ENCODE measurements at regions of chrX and their contacts with region 1.

Region 1: DNA sequence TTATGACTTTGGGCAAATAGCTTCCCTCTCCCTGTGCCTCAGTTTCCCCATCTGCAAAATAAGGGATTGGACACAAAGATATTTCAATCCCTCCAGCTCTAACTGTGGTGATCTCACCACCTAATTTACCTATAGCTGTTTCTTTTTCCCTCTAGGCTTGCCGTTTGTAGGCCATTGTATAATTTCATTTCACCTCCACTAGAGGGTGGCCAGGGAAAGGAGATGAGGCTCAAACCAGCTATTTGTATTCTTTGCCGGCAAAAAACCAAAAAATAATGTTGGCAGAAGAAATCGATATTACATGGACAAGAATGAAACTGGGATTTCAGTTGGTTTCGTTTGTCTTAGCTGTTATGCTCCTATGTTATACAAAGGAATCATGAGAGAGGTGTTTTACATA is 36.1 kb upstream of the DOCK11 start:
- DNase-seq: no peak
- ATAC-seq: no peak
- H3K4me3 ChIP-seq: no peak overlapping the region
- H3K27ac ChIP-seq: no peak overlapping the region
- H3K4me1 ChIP-seq: no peaks in the 10 kb centered on the region
- H3K27me3 ChIP-seq: no peaks in the 10 kb centered on the region
- CTCF ChIP-seq: peak in 9 of 12 donors; percentile 17 to 49 (median 37)
- POLR2A ChIP-seq: no peak

Region 2: GRCh38 chrX:118595501-118596042 is 136.1 kb after region 1 on chrX:
- intact Hi-C with region 1: loop called in 4 of 10 experiments (anchors 2 to 10 kb)
- DNase-seq: no peak
- ATAC-seq: peak in 1 of 4 donors; percentile 33
- H3K4me3 ChIP-seq: no peak overlapping the region
- H3K27ac ChIP-seq: peak overlapping the region in 2 of 12 donors; percentile 19 to 24
- H3K4me1 ChIP-seq: peaks cover 0 to 3% (median 0%) of the 10 kb centered on the region in 12 donors
- H3K27me3 ChIP-seq: peaks cover 0 to 11% (median 0%) of the 10 kb centered on the region in 9 donors
- CTCF ChIP-seq: no peak
- POLR2A ChIP-seq: no peak

Region 3: DNA sequence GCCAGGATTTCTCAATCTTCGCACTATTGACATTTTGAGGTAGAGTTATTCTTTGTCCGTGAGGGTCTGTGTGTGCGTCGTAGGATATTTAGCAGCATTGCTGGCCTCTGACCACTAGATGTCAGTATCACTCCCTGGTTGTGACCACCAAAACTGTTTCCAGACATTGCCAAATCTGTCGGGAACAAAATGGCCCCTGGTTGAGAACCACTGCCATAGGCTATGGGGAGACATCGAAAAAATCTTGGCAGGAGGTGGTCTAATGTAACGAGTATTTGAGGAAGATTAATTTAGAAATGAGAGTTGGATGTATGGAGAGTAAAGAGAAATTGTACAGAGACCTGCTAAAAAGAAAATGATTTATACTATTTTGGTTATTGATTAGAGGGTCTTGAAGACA is 144.5 kb after region 1 on chrX:
- intact Hi-C with region 1: loop called in 4 of 10 experiments (anchors 2 to 10 kb)
- DNase-seq: peak in 3 of 5 donors; percentile 10 to 38 (median 22)
- ATAC-seq: peak; percentile 37 to 77 (median 59)
- H3K4me3 ChIP-seq: peak overlapping the region in 2 of 12 donors; percentile 4 to 24
- H3K27ac ChIP-seq: peak overlapping the region in 1 of 12 donors; percentile 36
- H3K4me1 ChIP-seq: peaks cover 0 to 4% (median 0%) of the 10 kb centered on the region in 12 donors
- H3K27me3 ChIP-seq: peaks cover 0 to 5% (median 0%) of the 10 kb centered on the region in 9 donors
- CTCF ChIP-seq: peak; percentile 62 to 81 (median 73)
- POLR2A ChIP-seq: no peak

Region 4: DNA sequence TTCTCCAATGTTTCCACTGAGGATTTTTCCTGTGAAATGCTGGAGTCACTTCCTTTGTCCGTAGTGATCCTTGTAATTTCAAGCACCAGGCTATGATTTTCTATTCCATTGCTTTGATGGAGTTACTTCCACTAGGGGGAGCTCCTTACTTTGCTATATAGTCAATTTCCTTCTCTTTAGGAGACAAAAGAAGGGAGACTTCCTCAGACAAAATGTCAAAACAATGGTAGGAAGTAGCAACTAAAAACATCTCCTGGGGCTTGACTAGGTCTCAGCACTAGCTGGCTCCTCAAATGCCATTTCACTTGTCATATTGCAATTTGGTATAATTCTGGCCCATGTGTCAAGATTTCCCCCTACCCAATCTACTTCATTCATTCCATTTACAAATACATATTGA is 388.2 kb after region 1 on chrX:
- intact Hi-C with region 1: no loop called
- DNase-seq: no peak
- ATAC-seq: peak in 2 of 4 donors; percentile 58 to 64
- H3K4me3 ChIP-seq: no peak overlapping the region
- H3K27ac ChIP-seq: no peak overlapping the region
- H3K4me1 ChIP-seq: peaks cover 0 to 3% (median 0%) of the 10 kb centered on the region in 12 donors
- H3K27me3 ChIP-seq: peaks cover 0 to 5% (median 0%) of the 10 kb centered on the region in 9 donors
- CTCF ChIP-seq: peak; percentile 46 to 70 (median 60)
- POLR2A ChIP-seq: no peak